ENCODE measurements at regions of chr12 and their contacts with region 1.

Region 1: DNA sequence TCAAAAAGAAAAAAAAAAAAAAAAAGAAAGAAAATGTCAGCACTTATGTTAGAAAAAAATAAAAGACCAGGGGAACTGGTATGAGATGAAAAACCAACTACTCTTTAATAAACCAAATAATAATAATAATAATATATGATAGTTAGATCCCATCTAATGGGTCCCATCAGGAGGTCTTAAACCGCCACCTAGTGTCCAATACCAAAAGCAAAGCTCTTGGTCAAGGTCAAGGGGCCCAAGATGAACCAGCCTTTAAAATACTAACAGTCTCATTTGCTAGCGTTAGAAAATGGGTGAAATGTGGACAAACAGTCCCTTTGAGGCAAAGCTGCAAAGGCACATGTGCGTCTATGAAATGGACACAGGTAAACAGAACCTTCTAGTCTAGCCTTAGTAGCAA is 12.3 kb downstream of the BRAP start:
- DNase-seq: no peak
- ATAC-seq: no peak
- H3K4me3 Mint-ChIP-seq: no peak overlapping the region
- H3K27ac Mint-ChIP-seq: no peak overlapping the region
- H3K4me1 Mint-ChIP-seq: no peaks in the 10 kb centered on the region
- H3K27me3 Mint-ChIP-seq: no peaks in the 10 kb centered on the region
- CTCF ChIP-seq: peak; percentile 20; the same call in 1 of the 2 replicates

Region 2: DNA sequence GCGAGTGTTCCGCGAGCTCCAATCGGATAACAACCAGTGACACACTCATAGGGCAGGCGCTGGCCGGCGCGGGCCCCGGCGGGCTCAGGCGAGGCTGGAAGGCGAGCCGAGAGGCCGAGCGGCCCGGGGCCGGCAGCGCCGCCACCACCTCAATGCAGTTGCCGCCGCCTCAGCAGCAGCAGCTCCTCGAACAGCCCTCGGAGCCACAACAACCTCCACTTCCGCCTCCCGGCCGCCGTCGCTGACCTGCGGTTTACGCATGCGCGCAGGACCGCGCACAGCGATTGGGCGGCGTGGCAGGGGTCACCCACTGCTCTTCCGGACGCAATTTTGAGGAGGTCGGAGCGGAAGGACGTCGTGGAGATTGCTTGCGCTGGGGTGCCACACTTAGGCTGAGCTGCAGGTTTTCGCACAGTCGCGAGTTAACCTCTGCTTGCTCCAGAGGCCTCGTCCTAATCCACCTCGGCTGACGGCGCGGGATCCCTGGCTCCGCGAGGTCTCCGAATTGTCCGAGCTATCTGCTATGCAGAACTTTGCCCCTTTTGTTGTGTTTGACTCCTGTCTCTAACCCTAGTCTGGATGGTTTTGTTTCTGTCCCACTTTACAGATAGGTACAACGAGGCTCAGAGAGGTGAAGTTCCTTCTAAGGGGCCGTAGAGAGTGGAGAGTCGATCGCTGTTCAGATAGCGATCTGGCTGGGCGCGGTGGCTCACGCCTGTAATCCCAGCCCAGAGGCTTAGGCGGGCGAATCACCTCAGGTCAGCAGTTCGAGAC is 12.4 kb after region 1 on chr12 and contains the starts of genes ACAD10 and BRAP:
- CTCF ChIA-PET with region 1: interaction called, 13 read pairs
- POLR2A ChIA-PET with region 1: no interaction called
- DNase-seq: peak; percentile 93
- ATAC-seq: peak; percentile 94
- H3K4me3 Mint-ChIP-seq: peak within 1 kb of the TSS; percentile 99
- H3K27ac Mint-ChIP-seq: peak within 1 kb of the TSS; percentile 95
- H3K4me1 Mint-ChIP-seq: peaks cover 26% of the 10 kb centered on the region
- H3K27me3 Mint-ChIP-seq: no peaks in the 10 kb centered on the region; the same call in 1 of the 2 replicates
- CTCF ChIP-seq: no peak
- total RNA-seq, gene ACAD10: 29.1 to 37.5 TPM (median 37.1 TPM) in 3 replicates
- total RNA-seq, gene BRAP: 17.3 to 18.3 TPM (median 18.1 TPM) in 3 replicates